Heart left ventricle (tissue), 16 donors: ENCODE measurements at regions of chr17 and their contacts with region 1.

Region 1: DNA sequence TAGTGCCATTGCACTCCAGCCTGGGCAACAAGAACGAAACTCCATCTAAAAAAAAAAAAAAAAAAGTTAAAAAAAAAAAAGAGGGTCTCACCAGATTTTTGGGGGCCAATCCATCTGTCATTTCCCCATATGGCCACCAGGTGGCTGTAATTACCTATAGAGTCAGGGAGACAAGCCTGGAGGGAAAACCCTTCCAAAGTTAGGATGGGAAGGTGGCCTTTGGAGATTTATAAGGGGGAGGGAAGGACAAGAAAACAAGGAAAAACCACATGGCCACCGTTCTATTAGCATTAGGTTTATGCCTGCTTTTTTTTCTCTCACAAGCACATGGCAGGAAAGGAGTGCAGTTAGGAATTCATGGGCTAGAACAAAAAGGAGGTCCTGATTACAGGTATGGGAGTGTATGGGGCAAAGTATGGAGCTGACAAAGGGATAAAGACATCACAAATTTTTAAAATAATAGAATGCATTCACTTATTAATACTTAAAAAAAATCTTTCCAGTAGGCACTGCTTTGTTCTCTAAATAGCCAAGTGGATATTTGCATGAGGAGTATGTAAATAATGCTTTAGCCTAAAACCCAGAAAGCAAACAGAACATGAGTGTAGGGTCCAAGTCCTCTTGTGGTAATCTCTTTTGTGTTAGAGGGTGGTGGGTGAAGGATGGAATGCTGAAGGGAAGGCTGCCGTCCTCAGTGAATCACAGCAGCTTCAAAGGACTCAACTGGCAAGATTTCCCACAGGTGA is 5.1 kb downstream of the CYB5D1 start:
- DNase-seq: peak in 1 of 5 donors; percentile 49
- ATAC-seq: no peak
- H3K4me3 ChIP-seq: no peak overlapping the region
- H3K27ac ChIP-seq: no peak overlapping the region
- H3K4me1 ChIP-seq: peaks cover 0 to 20% (median 13%) of the 10 kb centered on the region in 12 donors
- H3K27me3 ChIP-seq: no peaks in the 10 kb centered on the region
- CTCF ChIP-seq: peak; percentile 69 to 90 (median 83)
- POLR2A ChIP-seq: no peak

Region 2: GRCh38 chr17:7745748-7746470 is 117.0 kb before region 1 on chr17:
- intact Hi-C with region 1: loop called in 8 of 10 experiments (anchors 5 to 10 kb)
- DNase-seq: no peak
- ATAC-seq: no peak
- H3K4me3 ChIP-seq: no peak overlapping the region
- H3K27ac ChIP-seq: no peak overlapping the region
- H3K4me1 ChIP-seq: peaks cover 0 to 10% (median 5%) of the 10 kb centered on the region in 12 donors
- H3K27me3 ChIP-seq: peaks cover 0 to 5% (median 0%) of the 10 kb centered on the region in 9 donors
- CTCF ChIP-seq: no peak
- POLR2A ChIP-seq: no peak

Region 3: DNA sequence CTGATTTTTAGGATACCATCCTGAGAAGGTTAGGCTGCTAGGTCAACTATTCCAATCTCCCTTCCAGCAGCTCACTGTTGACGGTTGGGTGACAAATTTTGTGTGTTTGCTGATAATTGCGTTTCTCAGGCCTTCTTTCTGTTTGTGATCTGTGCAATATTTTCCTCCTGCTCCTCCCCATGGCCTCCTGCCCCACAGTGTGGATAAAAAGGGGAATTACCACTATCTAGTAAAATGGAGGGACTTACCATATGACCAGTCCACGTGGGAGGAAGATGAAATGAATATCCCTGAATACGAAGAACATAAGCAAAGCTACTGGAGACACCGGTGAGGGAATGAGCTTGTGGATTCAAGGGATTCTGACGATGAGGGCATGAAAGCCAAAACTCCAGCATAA is 34.9 kb after region 1 on chr17:
- intact Hi-C with region 1: loop called in 8 of 10 experiments (anchors 1 to 5 kb)
- DNase-seq: no peak
- ATAC-seq: peak; percentile 65 to 86 (median 72)
- H3K4me3 ChIP-seq: no peak overlapping the region
- H3K27ac ChIP-seq: peak overlapping the region in 1 of 12 donors; percentile 10
- H3K4me1 ChIP-seq: peaks cover 0 to 11% (median 0%) of the 10 kb centered on the region in 12 donors
- H3K27me3 ChIP-seq: no peaks in the 10 kb centered on the region
- CTCF ChIP-seq: peak; percentile 18 to 64 (median 49)
- POLR2A ChIP-seq: no peak